Psoas muscle (tissue), 8 donors: ENCODE measurements at regions of chr16 and their contacts with region 1.

Region 1: DNA sequence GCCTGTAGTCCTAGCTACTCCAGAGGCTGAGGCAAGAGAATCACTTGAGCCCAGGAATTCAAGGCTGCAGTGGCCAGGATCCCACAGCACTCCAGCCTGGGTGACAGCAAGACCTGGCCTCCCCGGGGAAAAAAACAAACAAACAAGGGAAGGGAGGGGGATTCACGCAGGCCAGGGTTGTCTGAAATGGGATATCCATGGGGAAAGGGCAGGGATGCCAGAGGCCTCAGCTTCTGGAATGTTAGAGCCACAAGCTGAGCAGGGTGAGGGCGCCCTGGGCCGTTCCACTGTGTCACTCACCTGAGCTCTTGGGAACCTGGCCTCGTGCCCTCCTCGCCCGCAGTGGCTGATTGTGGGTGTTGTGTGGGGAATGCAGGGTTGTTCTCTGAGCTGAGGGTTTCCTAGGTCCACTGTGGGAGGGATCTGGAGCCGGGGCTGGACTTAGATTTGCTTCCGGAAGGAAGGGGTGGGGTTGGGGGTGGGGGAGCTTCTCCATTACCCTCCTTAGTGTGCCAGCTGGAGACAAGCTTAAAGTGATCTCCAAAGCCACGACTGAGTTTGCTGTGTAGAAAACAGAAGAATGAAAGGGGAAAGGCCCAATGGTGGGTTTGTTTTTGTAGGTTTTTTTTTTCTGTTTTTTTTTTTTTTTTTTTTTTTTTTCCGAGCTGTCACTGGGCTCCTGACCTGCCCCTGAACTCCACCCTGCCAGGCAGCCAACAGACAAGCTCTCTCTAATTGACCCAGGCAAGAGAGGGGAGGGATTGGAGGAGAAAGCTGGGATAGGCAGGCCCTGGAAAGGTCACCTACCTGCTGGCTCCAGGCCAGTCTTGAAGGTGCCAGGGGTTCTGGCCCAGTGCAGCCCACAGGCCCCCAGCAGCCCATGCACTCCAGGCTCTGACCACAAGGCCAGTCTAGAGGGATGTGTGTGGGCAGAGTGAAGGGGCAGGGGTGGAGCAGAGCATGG is at the start of gene SULT1A1:
- DNase-seq: peak; percentile 41 to 79
- ATAC-seq: peak; percentile 55 to 78 (median 60)
- H3K4me3 ChIP-seq: peak within 1 kb of the TSS; percentile 52
- H3K27ac ChIP-seq: no peak within 1 kb of the TSS
- H3K4me1 ChIP-seq: peaks cover 10% of the 10 kb centered on the region
- H3K27me3 ChIP-seq: no peaks in the 10 kb centered on the region
- CTCF ChIP-seq: no peak
- total RNA-seq, gene SULT1A1: 8.1 to 22.8 (median 13.4) TPM

Region 2: GRCh38 chr16:28130099-28131088 is 479.5 kb before region 1 on chr16:
- intact Hi-C with region 1: no loop called
- DNase-seq: no peak
- ATAC-seq: no peak
- H3K4me3 ChIP-seq: no peak overlapping the region
- H3K27ac ChIP-seq: peak overlapping the region; percentile 12
- H3K4me1 ChIP-seq: no peaks in the 10 kb centered on the region
- H3K27me3 ChIP-seq: no peaks in the 10 kb centered on the region
- CTCF ChIP-seq: no peak

Region 3: DNA sequence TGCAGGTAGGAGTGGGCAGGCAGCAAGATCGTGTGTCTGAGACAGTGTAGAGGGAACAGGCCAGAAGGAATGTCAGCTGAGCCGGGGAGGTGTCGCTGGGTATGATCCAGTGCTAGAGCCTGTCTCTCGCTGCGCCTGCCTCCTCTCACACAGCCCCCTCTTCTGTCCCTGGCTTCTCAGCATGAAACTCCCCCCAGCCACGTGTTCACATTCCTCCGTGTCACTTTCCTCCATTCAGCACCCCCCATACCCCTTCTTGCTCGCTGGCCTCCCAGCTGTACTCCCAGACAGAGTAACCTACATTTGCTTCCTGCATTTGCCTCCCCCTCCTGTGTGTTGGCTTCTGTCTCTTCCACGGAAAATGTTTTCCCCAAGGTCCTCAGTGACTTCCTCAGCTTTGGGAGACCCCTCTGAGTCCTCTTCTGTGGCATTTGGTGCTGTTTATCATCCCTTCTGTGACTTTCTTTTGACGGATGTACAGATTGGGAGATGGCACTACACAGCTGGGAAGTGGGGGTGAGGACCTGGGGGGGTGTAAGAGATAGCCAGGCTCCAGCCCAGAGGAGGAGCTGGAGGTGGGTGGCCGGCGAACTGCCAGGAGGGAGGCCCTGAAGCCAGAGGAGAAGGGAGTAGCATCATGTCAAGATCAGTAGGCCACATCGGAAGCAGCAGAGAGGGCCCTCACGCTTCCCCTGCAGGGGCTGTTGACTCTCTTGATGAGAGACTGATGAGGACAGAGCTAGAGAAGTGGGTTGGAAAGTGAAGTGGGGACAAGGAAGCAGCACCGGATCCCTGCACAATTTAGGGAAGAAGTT is 37.0 kb before region 1 on chr16:
- intact Hi-C with region 1: loop called in 1 of 2 experiments (anchors 5 kb)
- DNase-seq: no peak
- ATAC-seq: peak; percentile 83 to 90 (median 88)
- H3K4me3 ChIP-seq: no peak overlapping the region
- H3K27ac ChIP-seq: peak overlapping the region; percentile 46
- H3K4me1 ChIP-seq: peaks cover 16% of the 10 kb centered on the region
- H3K27me3 ChIP-seq: no peaks in the 10 kb centered on the region
- CTCF ChIP-seq: no peak